OCI-LY7 (cell line): ENCODE measurements at regions of chr6 and their contacts with region 1.

Region 1: GRCh38 chr6:116570856-116571682 is at the start of gene RWDD1:
- DNase-seq: peak; percentile 99
- H3K4me3 ChIP-seq: peak within 1 kb of the TSS; percentile 91
- H3K27ac ChIP-seq: peak within 1 kb of the TSS; percentile 81
- H3K4me1 ChIP-seq: peaks cover 36% of the 10 kb centered on the region
- CTCF ChIP-seq: no peak; the same call in 1 of the 2 replicates
- total RNA-seq, gene RWDD1: 23.0 and 33.4 TPM in 2 replicates

Region 2: GRCh38 chr6:116100419-116101301 is 470.4 kb before region 1 on chr6 and contains the start of gene NT5DC1:
- CTCF ChIA-PET with region 1: no interaction called
- POLR2A ChIA-PET with region 1: no interaction called
- intact Hi-C with region 1: loop called (anchors 2 kb)
- DNase-seq: peak; percentile 90
- H3K4me3 ChIP-seq: peak within 1 kb of the TSS; percentile 78
- H3K27ac ChIP-seq: peak within 1 kb of the TSS; percentile 82
- H3K4me1 ChIP-seq: peaks cover 37% of the 10 kb centered on the region
- CTCF ChIP-seq: peak; percentile 57
- total RNA-seq, gene NT5DC1: 11.3 and 20.5 TPM in 2 replicates

Region 3: GRCh38 chr6:116352515-116353471 is 218.3 kb before region 1 on chr6:
- CTCF ChIA-PET with region 1: no interaction called
- POLR2A ChIA-PET with region 1: no interaction called
- intact Hi-C with region 1: no loop called
- DNase-seq: no peak
- H3K4me3 ChIP-seq: no peak overlapping the region
- H3K27ac ChIP-seq: no peak overlapping the region
- H3K4me1 ChIP-seq: no peaks in the 10 kb centered on the region
- CTCF ChIP-seq: no peak

Region 4: DNA sequence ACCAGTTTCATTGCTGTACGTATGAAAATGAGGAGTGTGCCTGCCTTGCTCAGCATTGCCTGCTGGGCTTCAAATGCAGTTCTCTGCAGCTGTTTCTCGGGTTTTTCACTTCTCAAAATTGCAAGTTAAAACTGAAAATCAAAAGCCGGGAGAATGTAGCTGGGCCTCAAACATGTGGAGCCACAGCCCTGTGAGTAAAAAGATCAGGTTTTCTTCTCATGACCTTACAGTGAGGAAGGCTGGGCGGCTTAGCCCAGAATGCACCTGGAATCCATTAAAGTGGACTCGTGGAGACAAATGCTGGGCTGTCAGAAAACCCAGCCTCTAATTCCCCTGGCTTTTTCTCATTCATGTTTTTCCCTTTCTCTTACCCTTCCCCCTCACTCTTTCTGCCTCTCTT is 165.9 kb before region 1 on chr6:
- CTCF ChIA-PET with region 1: no interaction called
- POLR2A ChIA-PET with region 1: interaction called, 6 read pairs
- intact Hi-C with region 1: loop called (anchors 2 kb)
- DNase-seq: peak; percentile 89
- H3K4me3 ChIP-seq: peak overlapping the region; percentile 52
- H3K27ac ChIP-seq: peak overlapping the region; percentile 92
- H3K4me1 ChIP-seq: peaks cover 47% of the 10 kb centered on the region
- CTCF ChIP-seq: no peak

Region 5: GRCh38 chr6:116667623-116668022 is 96.6 kb after region 1 on chr6:
- CTCF ChIA-PET with region 1: no interaction called
- POLR2A ChIA-PET with region 1: interaction called, 12 read pairs
- intact Hi-C with region 1: loop called (anchors 5 kb)
- DNase-seq: peak; percentile 61
- H3K4me3 ChIP-seq: peak overlapping the region; percentile 79
- H3K27ac ChIP-seq: peak overlapping the region; percentile 45
- H3K4me1 ChIP-seq: peaks cover 26% of the 10 kb centered on the region
- CTCF ChIP-seq: no peak

Region 6: GRCh38 chr6:117674991-117675657 is 1104.1 kb after region 1 on chr6 and contains the start of gene NUS1:
- CTCF ChIA-PET with region 1: no interaction called
- POLR2A ChIA-PET with region 1: no interaction called
- intact Hi-C with region 1: loop called (anchors 5 kb)
- DNase-seq: peak; percentile 97
- H3K4me3 ChIP-seq: peak within 1 kb of the TSS; percentile 81
- H3K27ac ChIP-seq: no peak within 1 kb of the TSS
- H3K4me1 ChIP-seq: peaks cover 19% of the 10 kb centered on the region
- CTCF ChIP-seq: peak; percentile 82
- total RNA-seq, gene NUS1: 8.9 and 9.8 TPM in 2 replicates